ENCODE measurements at regions of chr16 and their contacts with region 1.

Region 1: DNA sequence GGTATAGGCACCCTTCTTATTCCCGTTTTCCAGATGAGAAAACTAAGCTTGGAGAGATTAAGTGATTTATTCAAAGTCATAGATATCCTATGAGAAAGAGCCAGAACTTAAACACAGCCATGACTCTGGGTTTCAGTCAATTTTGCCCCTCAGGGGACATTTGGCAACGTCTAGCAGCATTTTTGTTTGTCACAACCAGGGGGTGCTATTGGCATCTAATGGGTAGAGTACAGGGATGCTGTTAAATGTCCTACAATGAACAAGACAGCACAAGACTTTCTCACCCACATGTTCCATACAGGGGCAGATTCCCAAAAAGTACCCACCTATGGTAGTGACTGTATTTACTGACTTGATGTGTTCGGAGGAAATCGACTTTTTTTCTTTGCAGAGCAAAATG is 4.8 kb upstream of the SHISA9 start:
- DNase-seq: peak; percentile 61
- H3K4me3 ChIP-seq: no peak overlapping the region
- H3K27ac ChIP-seq: no peak overlapping the region
- H3K4me1 ChIP-seq: peaks cover 19% of the 10 kb centered on the region
- H3K27me3 ChIP-seq: no peaks in the 10 kb centered on the region
- CTCF ChIP-seq: peak; percentile 64 to 84

Region 2: GRCh38 chr16:13245713-13246377 is 349.3 kb after region 1 on chr16:
- CTCF ChIA-PET with region 1: no interaction called
- dilution Hi-C with region 1: no loop called
- in situ Hi-C with region 1: no loop called
- intact Hi-C with region 1: loop called (anchors 2 kb)
- DNase-seq: no peak
- H3K4me3 ChIP-seq: no peak overlapping the region
- H3K27ac ChIP-seq: no peak overlapping the region
- H3K4me1 ChIP-seq: no peaks in the 10 kb centered on the region
- H3K27me3 ChIP-seq: no peaks in the 10 kb centered on the region
- CTCF ChIP-seq: no peak

Region 3: DNA sequence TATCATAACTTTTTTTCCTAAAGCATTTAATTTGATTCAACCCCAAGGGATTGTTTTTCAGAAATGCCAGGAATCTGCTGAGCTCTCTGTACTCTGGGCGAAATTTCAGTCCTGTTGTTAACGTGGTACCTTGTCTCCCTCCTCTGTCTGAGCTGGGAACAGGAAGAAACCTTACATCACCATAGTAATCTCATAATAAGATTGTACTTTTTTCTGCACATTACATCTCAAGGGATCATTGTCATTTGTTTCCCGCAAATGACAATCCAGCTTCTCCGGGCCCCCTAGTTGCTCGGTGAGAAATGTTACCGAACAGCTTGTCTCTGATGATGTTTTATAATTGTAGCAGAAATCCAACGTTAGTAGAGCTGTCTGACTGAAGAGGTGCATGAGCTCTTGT is 870.7 kb after region 1 on chr16:
- CTCF ChIA-PET with region 1: no interaction called
- dilution Hi-C with region 1: no loop called
- in situ Hi-C with region 1: no loop called
- intact Hi-C with region 1: loop called (anchors 5 kb)
- DNase-seq: no peak
- H3K4me3 ChIP-seq: no peak overlapping the region
- H3K27ac ChIP-seq: no peak overlapping the region
- H3K4me1 ChIP-seq: no peaks in the 10 kb centered on the region
- H3K27me3 ChIP-seq: no peaks in the 10 kb centered on the region
- CTCF ChIP-seq: peak in 1 of 2 donors; percentile 37

Region 4: GRCh38 chr16:13866073-13866472 is 969.5 kb after region 1 on chr16:
- CTCF ChIA-PET with region 1: no interaction called
- dilution Hi-C with region 1: no loop called
- in situ Hi-C with region 1: loop called in 1 of 2 experiments (anchors 25 kb)
- intact Hi-C with region 1: no loop called
- DNase-seq: peak; percentile 54
- H3K4me3 ChIP-seq: no peak overlapping the region
- H3K27ac ChIP-seq: no peak overlapping the region
- H3K4me1 ChIP-seq: no peaks in the 10 kb centered on the region
- H3K27me3 ChIP-seq: no peaks in the 10 kb centered on the region
- CTCF ChIP-seq: peak; percentile 68 to 69

Measured in mammary epithelial cell (primary cell).